ENCODE measurements at regions of chr6 and their contacts with region 1.

Region 1: DNA sequence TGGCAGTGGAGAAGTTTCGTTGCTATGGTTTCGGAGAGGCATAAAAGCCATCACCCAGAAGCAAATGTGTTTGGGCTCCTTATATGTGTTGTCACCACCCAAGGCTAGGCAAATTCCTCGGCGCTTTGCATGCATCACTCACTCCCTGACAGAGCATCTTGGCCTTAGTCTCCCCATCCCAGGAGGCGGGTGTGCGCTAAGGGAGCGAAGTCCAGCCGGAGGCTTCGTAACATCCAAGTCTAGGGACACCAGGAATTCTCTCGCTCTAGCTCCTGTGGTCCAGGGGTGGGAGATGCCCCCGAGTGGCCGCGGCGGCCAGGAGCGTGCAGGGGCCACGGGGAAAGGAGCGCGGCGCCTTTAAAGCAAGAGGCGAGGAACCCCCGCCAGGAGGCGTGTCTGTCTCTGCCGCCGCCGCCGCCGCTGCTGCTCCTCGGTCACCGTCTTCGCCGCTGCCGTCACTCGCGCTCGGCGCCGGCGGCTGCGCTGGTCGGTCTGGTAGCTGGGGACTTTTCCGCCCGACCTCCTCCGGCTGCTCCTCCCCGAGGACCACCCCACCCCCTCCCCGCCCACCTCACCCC is at the start of gene GRIK2:
- DNase-seq: peak; percentile 76
- H3K4me3 Mint-ChIP-seq: peak within 1 kb of the TSS; percentile 74
- H3K27ac Mint-ChIP-seq: no peak within 1 kb of the TSS
- H3K4me1 Mint-ChIP-seq: no peaks in the 10 kb centered on the region
- H3K27me3 Mint-ChIP-seq: no peaks in the 10 kb centered on the region
- CTCF ChIP-seq: peak; percentile 24
- total RNA-seq, gene GRIK2: 3.3 and 3.7 TPM in 2 replicates

Region 2: DNA sequence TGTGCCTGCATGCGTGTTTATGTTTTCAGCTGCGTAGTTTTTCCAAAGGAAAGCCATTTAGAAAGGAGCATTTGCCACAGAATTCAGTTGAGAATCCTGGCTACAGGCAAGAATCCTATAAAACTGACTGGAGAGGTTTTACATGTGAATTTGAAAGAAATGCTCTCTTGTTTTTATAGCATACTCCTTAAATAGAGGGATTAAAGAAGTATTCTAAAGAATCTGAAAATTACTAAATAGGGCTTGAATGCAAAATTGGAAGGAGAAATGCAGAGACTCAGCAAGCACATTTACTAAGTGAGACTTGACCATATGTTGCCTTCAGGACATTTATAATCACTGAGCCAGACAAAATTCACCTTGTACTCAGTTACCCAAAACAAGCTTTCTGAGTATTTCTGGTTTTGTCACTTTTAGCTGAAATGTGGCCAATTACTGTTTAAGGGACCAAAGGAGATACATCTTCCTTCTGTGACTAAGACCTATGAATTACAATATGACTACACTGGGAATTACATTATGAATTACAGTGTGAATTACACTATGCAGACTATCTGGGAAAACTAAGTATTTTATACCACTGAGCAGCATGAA is 404.9 kb before region 1 on chr6:
- CTCF ChIA-PET with region 1: no interaction called
- intact Hi-C with region 1: no loop called
- DNase-seq: no peak
- H3K4me3 Mint-ChIP-seq: no peak overlapping the region
- H3K27ac Mint-ChIP-seq: no peak overlapping the region
- H3K4me1 Mint-ChIP-seq: no peaks in the 10 kb centered on the region
- H3K27me3 Mint-ChIP-seq: no peaks in the 10 kb centered on the region
- CTCF ChIP-seq: no peak

Region 3: GRCh38 chr6:101352316-101352715 is 41.0 kb before region 1 on chr6:
- CTCF ChIA-PET with region 1: no interaction called
- intact Hi-C with region 1: no loop called
- DNase-seq: no peak
- H3K4me3 Mint-ChIP-seq: no peak overlapping the region
- H3K27ac Mint-ChIP-seq: no peak overlapping the region
- H3K4me1 Mint-ChIP-seq: no peaks in the 10 kb centered on the region
- H3K27me3 Mint-ChIP-seq: no peaks in the 10 kb centered on the region
- CTCF ChIP-seq: no peak

Region 4: DNA sequence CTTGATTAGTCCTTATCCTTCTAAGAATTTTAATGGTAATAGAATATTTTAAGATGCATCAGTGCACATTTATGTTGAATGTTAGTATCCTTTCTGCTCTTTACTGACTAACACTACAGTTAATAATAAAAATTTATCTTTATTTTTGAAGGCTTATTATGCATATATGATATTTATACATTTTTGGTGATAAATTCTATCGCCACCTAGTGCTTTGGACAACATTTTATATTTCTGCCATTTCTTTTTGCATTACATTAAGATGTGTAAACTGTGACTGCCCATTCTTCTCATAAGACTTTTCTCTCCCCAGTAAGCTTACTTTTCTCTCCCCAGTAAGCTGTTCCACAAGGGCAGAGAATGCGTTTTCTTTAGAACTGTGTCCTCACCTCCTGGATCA is 252.4 kb after region 1 on chr6:
- CTCF ChIA-PET with region 1: no interaction called
- intact Hi-C with region 1: loop called (anchors 5 kb)
- DNase-seq: no peak
- H3K4me3 Mint-ChIP-seq: no peak overlapping the region
- H3K27ac Mint-ChIP-seq: no peak overlapping the region
- H3K4me1 Mint-ChIP-seq: peaks cover 5% of the 10 kb centered on the region
- H3K27me3 Mint-ChIP-seq: no peaks in the 10 kb centered on the region
- CTCF ChIP-seq: no peak

Region 5: GRCh38 chr6:102619585-102619984 is 1226.2 kb after region 1 on chr6:
- CTCF ChIA-PET with region 1: no interaction called
- intact Hi-C with region 1: loop called (anchors 2 kb)
- DNase-seq: no peak
- H3K4me3 Mint-ChIP-seq: no peak overlapping the region
- H3K27ac Mint-ChIP-seq: no peak overlapping the region
- H3K4me1 Mint-ChIP-seq: no peaks in the 10 kb centered on the region
- H3K27me3 Mint-ChIP-seq: no peaks in the 10 kb centered on the region
- CTCF ChIP-seq: peak; percentile 31

Region 6: DNA sequence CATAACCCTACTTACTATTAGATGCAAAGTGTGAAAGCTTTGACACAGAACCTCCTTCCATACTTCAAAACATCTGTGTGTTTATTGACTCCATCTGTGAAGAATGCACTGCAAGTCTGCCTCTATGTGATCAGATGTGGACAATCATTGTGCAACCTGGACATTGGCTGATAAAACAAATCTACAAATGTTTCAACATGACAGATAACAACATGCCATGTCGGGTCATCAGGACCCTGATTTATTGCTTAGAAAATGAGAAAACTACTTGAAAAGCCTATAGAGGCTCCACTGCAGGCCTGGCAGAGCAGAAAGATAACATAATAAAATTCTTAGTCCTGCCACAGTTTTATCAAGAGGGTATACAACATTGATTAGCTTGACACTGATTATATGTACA is 1286.5 kb after region 1 on chr6:
- CTCF ChIA-PET with region 1: no interaction called
- intact Hi-C with region 1: loop called (anchors 10 kb)
- DNase-seq: no peak
- H3K4me3 Mint-ChIP-seq: no peak overlapping the region
- H3K27ac Mint-ChIP-seq: no peak overlapping the region
- H3K4me1 Mint-ChIP-seq: no peaks in the 10 kb centered on the region
- H3K27me3 Mint-ChIP-seq: no peaks in the 10 kb centered on the region
- CTCF ChIP-seq: no peak

Region 7: GRCh38 chr6:103122766-103123601 is 1729.6 kb after region 1 on chr6:
- CTCF ChIA-PET with region 1: no interaction called
- intact Hi-C with region 1: loop called (anchors 5 kb)
- DNase-seq: peak; percentile 79
- H3K4me3 Mint-ChIP-seq: no peak overlapping the region
- H3K27ac Mint-ChIP-seq: no peak overlapping the region
- H3K4me1 Mint-ChIP-seq: no peaks in the 10 kb centered on the region
- H3K27me3 Mint-ChIP-seq: no peaks in the 10 kb centered on the region
- CTCF ChIP-seq: peak; percentile 68